MCF 10A (cell line): ENCODE measurements at regions of chr6 and their contacts with region 1.

Region 1: GRCh38 chr6:116648156-116648555 is 20.4 kb downstream of the ZUP1 start:
- DNase-seq: no peak
- H3K4me3 Mint-ChIP-seq: no peak overlapping the region
- H3K27ac Mint-ChIP-seq: no peak overlapping the region
- H3K4me1 Mint-ChIP-seq: peaks cover 6% of the 10 kb centered on the region
- H3K27me3 Mint-ChIP-seq: no peaks in the 10 kb centered on the region
- CTCF ChIP-seq: no peak

Region 2: DNA sequence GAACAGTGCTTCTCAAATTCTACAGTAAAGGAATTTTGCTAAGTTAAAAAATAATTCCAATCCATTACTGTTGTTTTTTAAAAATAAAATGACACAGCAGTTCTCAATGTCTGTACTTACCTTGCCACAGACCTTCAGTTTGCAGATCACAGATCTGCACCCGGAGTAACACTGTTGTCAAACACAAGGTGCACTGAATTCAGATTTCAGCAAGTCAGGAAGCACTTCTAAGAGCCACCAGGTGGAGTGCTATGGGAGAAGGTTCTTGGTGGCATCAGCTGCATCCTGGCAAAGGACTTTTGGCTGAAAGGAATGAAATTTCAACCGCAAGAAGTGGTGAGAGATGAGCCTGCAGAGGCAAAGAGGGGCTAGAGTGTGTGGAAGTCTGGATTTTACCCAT is 14.5 kb before region 1 on chr6:
- CTCF ChIA-PET with region 1: interaction called, 12 read pairs
- POLR2A ChIA-PET with region 1: no interaction called
- intact Hi-C with region 1: no loop called
- DNase-seq: peak; percentile 19
- H3K4me3 Mint-ChIP-seq: no peak overlapping the region
- H3K27ac Mint-ChIP-seq: no peak overlapping the region
- H3K4me1 Mint-ChIP-seq: peaks cover 5% of the 10 kb centered on the region
- H3K27me3 Mint-ChIP-seq: no peaks in the 10 kb centered on the region
- CTCF ChIP-seq: peak; percentile 23

Region 3: DNA sequence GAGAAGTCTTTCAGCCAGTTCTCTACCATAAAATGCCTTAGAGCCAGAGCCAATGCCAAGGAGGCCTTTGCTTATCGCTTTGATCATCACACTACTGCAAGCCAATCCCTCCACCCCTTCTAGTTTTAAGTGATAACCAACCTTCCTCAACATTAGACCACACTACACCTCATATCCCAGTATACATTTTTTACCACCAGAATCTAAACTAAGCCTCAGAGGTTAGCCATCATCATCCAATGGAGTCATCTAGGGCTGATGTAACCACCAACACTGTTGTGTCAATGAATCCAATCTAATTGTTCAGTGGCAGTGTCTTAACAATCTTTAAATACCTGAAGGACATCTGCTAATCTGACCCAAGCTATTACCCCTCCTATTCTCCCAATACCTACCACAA is 14.0 kb after region 1 on chr6:
- CTCF ChIA-PET with region 1: interaction called, 29 read pairs
- POLR2A ChIA-PET with region 1: interaction called, 4 read pairs
- intact Hi-C with region 1: no loop called
- DNase-seq: no peak
- H3K4me3 Mint-ChIP-seq: no peak overlapping the region
- H3K27ac Mint-ChIP-seq: peak overlapping the region; percentile 12
- H3K4me1 Mint-ChIP-seq: peaks cover 41% of the 10 kb centered on the region
- H3K27me3 Mint-ChIP-seq: no peaks in the 10 kb centered on the region
- CTCF ChIP-seq: no peak

Region 4: DNA sequence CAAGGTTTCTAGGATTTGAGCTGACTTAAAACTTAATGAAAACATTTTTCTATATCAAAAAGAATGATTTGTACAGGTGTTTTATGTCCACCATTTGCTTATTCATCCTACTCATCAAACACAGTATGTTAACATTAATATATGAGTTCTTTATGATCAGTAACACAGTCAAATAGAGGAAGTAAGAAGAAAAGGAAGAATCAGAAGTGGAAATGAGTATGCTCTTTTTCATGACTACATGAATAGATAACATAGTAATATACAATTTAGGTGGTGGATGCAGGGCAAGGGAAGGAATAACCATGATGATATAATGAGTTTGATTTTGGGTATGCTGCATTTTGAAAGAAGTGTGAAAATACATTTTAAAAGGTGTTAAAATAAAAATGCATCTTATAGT is 49.3 kb after region 1 on chr6:
- CTCF ChIA-PET with region 1: no interaction called
- POLR2A ChIA-PET with region 1: no interaction called
- intact Hi-C with region 1: no loop called
- DNase-seq: no peak
- H3K4me3 Mint-ChIP-seq: no peak overlapping the region
- H3K27ac Mint-ChIP-seq: no peak overlapping the region
- H3K4me1 Mint-ChIP-seq: no peaks in the 10 kb centered on the region
- H3K27me3 Mint-ChIP-seq: no peaks in the 10 kb centered on the region
- CTCF ChIP-seq: no peak